MCF 10A (cell line): ENCODE measurements at regions of chr11 and their contacts with region 1.

Region 1: DNA sequence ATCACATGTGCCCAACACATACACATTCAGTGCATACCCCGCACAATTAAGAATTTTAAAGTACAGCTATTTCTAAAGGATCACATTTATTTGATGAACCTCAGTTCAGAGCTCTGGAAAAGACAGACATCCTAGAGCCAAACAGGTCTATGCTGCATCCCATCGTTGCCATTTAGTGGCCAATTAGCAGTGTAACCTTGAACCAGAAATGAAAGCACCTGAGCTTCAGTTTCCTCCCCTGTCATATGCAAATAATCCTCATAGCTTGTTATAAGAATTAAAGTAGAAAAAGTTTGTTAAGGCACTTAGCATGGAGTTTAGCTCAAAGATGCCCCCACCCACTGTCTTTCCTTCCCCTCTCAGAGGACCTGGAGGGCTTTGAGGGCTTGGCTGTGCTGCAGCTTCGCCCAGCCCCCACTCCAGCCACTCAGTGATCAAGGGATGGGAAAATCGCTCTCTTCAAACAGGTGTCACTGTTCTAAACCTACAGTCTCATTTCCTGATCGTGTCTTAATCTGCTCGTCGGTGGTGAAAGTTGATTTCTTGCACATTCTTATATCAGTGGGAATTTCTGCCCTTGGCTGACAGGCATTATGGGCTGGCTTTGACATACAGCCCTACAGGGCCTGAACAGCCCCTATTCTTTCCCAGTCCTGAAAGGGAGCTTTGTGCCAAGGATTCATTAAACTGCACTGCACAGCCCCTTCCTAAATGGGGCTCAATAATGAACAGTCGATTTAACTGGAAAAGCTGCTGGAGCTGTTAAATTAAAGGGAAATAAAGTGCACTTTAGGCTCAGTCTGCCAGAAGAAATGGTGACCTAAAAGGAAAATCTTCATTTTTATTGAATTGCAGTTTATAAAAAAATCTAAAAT is 23.3 kb upstream of the FAM181B start:
- DNase-seq: no peak
- H3K4me3 Mint-ChIP-seq: no peak overlapping the region
- H3K27ac Mint-ChIP-seq: no peak overlapping the region
- H3K4me1 Mint-ChIP-seq: no peaks in the 10 kb centered on the region
- H3K27me3 Mint-ChIP-seq: peaks cover 43% of the 10 kb centered on the region
- CTCF ChIP-seq: no peak

Region 2: DNA sequence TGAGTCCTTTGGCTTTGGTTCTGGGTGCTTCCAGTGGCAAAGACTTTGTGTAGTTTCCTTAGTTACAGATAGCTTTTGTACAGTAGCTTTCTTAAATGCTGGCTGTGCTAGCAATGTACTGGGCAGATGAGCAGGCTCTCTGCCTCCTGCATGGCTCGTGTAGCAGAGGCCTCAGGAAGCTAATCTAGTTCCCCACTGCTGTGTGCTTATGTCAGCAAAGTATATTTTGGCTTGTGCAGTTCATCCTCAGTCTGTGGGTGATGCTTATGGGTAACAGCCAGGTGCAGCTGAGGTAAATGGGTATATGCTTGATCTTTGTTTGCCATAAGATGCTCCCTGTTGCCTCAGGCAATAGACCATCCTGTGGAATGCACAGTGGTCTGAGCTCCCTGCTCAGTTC is 45.7 kb after region 1 on chr11:
- CTCF ChIA-PET with region 1: no interaction called
- POLR2A ChIA-PET with region 1: no interaction called
- intact Hi-C with region 1: loop called (anchors 5 kb)
- DNase-seq: no peak
- H3K4me3 Mint-ChIP-seq: no peak overlapping the region
- H3K27ac Mint-ChIP-seq: no peak overlapping the region
- H3K4me1 Mint-ChIP-seq: no peaks in the 10 kb centered on the region
- H3K27me3 Mint-ChIP-seq: peaks cover 90% of the 10 kb centered on the region
- CTCF ChIP-seq: no peak